Uterus (tissue), 4 donors: ENCODE measurements at regions of chr11 and their contacts with region 1.

Region 1: DNA sequence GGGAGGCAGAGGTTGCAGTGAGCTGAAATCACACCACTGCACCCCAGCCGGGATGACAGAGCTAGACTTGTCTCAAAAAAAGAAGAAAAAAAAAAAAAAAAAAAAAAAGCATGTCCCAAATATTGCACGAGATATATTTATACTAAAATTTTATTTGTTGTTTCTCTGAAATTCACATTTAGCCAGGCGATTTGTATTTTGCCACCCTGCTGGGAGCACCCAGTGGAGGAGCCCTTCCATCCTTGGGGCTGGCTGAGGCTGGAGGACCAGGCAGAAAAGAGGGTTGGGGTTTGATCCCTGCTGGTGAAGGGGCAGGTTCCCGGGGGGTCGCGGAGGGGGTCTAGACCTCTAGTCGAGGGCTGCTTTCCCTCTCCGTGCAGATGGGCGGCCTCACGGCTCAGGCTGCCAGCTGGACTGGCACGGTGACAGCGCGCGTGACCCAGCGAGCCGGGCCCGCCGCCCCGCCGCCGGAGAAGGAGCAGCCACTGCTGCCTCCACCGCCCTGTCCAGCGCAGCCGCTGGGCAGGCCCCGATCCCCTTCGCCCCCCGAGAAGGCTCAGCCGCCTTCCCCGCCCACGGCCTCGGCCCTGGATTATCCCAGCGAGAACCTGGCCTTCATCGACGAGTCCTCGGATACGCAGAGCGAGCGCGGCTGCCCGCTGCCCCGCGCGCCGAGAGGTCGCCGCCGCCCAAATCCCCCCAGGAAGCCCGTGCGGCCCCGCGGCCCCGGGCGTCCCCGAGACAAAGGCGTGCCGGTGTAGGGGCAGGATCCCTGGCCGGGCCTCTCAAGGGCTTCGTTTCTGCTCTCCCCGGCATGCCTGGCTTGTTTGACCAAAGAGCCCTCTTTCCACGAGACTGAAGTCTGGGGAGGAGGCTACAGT is 952 bp upstream of the CATSPERZ start:
- DNase-seq: peak; percentile 43 to 58
- H3K4me3 ChIP-seq: peak overlapping the region; percentile 4 to 16
- H3K27ac ChIP-seq: peak overlapping the region in 1 of 2 donors; percentile 63
- H3K4me1 ChIP-seq: peaks cover 0 to 20% of the 10 kb centered on the region in 2 donors
- H3K27me3 ChIP-seq: peaks cover 15 to 19% of the 10 kb centered on the region in 2 donors
- CTCF ChIP-seq: peak in 1 of 4 experiments; percentile 4
- POLR2A ChIP-seq: no peak

Region 2: DNA sequence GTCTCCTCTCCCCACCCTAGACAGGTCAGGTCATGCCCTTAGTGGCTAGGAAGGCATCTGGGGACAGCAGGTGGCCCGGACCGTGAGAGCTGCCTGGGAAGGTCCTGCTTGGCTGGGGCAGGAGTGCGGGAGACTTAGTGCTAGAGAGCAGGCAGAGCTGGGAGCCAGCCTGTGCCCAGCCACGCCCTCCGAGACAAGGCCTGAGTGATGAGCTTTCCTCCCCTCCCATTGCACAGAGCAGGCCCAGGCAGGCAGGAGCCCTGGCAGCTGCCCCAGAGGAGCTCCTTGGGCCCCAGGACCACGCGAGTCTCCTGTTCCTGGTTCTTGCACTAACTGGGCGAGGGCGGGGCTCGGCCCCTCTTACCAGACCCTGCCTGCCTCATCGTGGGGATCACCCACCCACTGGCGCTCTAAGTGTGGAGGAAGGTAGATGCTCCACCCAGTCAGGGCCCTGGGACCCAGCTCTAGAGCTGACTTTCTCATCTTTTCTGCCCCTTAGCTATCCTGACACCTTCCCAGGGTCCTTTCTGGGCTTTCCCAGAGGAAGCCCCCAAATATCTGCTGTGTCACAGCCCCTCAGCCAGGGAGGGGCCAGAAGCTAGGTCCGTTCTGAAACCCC is 178.1 kb before region 1 on chr11:
- intact Hi-C with region 1: no loop called
- DNase-seq: no peak
- H3K4me3 ChIP-seq: no peak overlapping the region
- H3K27ac ChIP-seq: no peak overlapping the region
- H3K4me1 ChIP-seq: no peaks in the 10 kb centered on the region
- H3K27me3 ChIP-seq: no peaks in the 10 kb centered on the region
- CTCF ChIP-seq: no peak
- POLR2A ChIP-seq: no peak

Region 3: DNA sequence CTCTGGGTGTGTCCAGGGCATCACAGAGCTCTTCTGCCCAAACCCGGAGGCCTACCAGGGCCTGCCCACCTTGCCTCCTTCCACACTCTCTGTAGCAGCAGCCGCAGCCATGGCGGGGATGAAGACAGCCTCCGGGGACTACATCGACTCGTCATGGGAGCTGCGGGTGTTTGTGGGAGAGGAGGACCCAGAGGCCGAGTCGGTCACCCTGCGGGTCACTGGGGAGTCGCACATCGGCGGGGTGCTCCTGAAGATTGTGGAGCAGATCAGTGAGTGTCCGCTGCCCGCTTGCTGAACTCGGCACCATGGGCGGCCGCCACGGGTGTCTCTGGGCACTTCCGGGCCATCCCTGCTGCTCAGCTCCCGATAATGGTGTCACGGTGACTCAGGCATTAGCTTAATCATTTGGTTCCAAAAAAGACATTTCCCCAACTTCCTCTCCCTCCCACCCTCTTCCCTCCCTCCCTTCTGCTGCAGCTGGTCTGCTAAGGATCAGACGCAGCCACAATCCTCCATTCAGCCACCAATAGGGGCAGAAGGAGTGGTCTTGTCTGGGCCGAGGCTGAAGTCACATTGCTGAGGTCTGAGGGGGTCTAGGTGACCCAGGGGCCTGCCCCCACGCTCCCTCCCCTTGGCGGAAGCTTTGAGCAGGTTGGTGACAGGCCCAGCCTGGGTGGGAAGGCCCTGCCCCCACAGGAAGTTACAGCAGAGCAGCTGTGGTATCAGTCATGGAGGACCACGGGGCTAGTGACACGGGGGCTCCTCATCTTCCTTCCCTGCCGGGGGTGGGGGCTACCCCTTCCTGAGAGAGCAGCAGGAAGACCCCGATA is 91.7 kb before region 1 on chr11:
- intact Hi-C with region 1: loop called (anchors 5 kb)
- DNase-seq: peak; percentile 63 to 72
- H3K4me3 ChIP-seq: no peak overlapping the region
- H3K27ac ChIP-seq: peak overlapping the region; percentile 65 to 78
- H3K4me1 ChIP-seq: no peaks in the 10 kb centered on the region
- H3K27me3 ChIP-seq: no peaks in the 10 kb centered on the region
- CTCF ChIP-seq: no peak
- POLR2A ChIP-seq: no peak

Region 4: GRCh38 chr11:64251016-64251752 is 48.0 kb before region 1 on chr11 and contains the start of gene PLCB3:
- intact Hi-C with region 1: no loop called
- DNase-seq: peak in 1 of 2 donors; percentile 70
- H3K4me3 ChIP-seq: peak within 1 kb of the TSS; percentile 82 to 88
- H3K27ac ChIP-seq: peak within 1 kb of the TSS; percentile 63 to 75
- H3K4me1 ChIP-seq: peaks cover 0 to 16% of the 10 kb centered on the region in 2 donors
- H3K27me3 ChIP-seq: no peaks in the 10 kb centered on the region
- CTCF ChIP-seq: peak; percentile 70 to 95 (median 85)
- POLR2A ChIP-seq: peak; percentile 82
- total RNA-seq, gene PLCB3: 10.0 to 39.5 (median 21.8) TPM

Region 5: GRCh38 chr11:64341851-64342791 is 42.9 kb after region 1 on chr11:
- intact Hi-C with region 1: no loop called
- DNase-seq: peak; percentile 80 to 89
- H3K4me3 ChIP-seq: peak overlapping the region in 1 of 2 donors; percentile 30
- H3K27ac ChIP-seq: peak overlapping the region; percentile 7 to 9
- H3K4me1 ChIP-seq: no peaks in the 10 kb centered on the region
- H3K27me3 ChIP-seq: no peaks in the 10 kb centered on the region
- CTCF ChIP-seq: peak in 3 of 4 experiments; percentile 44 to 56 (median 54)
- POLR2A ChIP-seq: peak in 1 of 2 donors; percentile 35

Region 6: DNA sequence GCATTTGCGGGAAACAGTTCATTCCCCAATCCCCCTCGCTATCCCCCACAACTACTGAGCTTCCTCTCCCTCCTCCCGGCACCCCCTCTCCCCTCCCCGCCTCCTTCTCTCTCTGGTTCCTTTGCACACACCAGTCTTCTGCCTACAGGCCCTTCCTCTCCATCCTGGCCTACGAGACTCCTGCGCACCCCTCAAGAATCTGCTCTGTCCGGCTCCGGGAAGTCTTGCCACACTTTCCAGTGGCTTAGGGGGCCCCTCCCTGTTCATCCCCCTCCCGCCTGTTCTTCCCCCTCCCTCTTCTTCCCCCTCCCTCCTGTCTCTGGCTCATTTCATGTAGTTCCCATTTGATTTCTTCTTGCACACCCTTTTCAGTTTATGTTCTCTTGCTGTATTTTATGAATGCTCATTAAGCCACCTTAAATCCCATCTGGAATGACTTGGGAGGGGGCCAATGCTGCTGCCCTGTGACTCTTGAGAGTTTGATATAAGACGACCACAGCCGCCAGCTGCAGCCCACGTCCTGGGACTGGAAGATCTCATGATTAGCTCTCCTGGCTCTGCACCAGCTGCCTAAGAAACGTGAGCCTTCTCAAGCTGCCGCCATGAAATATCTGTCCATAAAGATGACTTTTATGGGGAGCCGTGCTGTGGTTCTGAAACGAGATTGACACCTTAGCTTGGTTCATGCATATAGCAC is 110.6 kb after region 1 on chr11:
- intact Hi-C with region 1: no loop called
- DNase-seq: peak; percentile 62 to 87
- H3K4me3 ChIP-seq: no peak overlapping the region
- H3K27ac ChIP-seq: peak overlapping the region; percentile 48 to 50
- H3K4me1 ChIP-seq: peaks cover 0 to 13% of the 10 kb centered on the region in 2 donors
- H3K27me3 ChIP-seq: no peaks in the 10 kb centered on the region
- CTCF ChIP-seq: no peak
- POLR2A ChIP-seq: no peak